ENCODE measurements at regions of chr20 and their contacts with region 1.

Region 1: GRCh38 chr20:20237093-20237959 is 130.6 kb upstream of the INSM1 start:
- DNase-seq: peak in 17 of 35 experiments; percentile 4 to 52 (median 14)
- ATAC-seq: no peak
- H3K4me3 ChIP-seq: no peak overlapping the region
- H3K4me3 Mint-ChIP-seq: no peak overlapping the region
- H3K27ac ChIP-seq: no peak overlapping the region
- H3K27ac Mint-ChIP-seq: no peak overlapping the region
- H3K4me1 ChIP-seq: no peaks in the 10 kb centered on the region
- H3K4me1 Mint-ChIP-seq: peaks cover 0 to 2% (median 0%) of the 10 kb centered on the region in 3 donors
- H3K27me3 ChIP-seq: peaks cover 0 to 9% of the 10 kb centered on the region in 2 experiments
- H3K27me3 Mint-ChIP-seq: peaks cover 8 to 10% of the 10 kb centered on the region in 2 donors

Region 2: DNA sequence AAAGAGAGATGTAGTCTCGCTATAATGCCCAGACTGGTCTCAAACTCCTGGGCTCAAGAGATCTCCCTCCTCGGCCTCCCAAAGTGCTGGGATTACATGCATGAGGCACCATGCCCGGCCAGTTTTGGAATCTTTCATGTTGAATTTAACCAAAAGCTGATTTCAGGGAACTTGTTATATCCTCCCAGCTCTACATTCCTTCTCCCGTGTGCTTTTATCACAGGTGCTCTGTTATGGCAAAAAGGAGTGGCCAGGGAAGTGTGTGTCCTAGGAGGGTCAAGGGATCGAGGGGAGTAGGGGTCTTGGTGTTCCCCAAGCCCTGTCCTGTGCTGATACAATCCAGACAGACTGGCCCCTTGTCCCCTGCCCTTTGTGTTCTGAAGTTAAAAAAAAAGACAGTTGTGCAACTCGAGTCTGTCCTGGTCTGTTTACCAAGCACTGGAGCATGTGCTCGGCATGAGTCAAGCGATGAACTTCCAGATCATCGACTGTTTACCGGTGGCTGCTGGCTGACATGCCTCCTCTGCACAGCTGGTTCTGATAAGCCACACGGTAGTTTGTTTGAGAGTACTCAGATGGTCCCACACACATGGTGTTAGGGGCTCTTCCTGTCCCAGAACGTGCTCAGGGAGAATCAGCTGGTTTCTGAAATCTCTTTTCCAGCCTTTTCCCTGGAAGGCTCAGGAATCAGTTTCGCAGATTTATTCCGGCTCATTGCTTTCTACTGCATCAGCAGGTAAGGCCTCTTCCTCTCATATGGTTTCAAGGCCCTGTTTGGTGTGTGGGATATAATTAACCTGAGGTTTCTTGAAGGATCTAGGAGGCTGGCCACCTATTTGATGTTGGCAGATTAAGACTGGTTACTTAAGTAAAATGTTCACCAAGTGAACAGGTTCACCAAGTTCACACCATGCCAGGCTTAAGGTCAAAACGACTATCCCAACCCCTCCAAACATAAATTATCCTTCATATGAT is 272.8 kb before region 1 on chr20:
- CTCF ChIA-PET with region 1: no interaction called
- POLR2A ChIA-PET with region 1: no interaction called
- DNase-seq: no peak
- ATAC-seq: no peak
- H3K4me3 ChIP-seq: no peak overlapping the region
- H3K4me3 Mint-ChIP-seq: no peak overlapping the region
- H3K27ac ChIP-seq: no peak overlapping the region
- H3K27ac Mint-ChIP-seq: no peak overlapping the region
- H3K4me1 ChIP-seq: peaks cover 4 to 17% of the 10 kb centered on the region in 2 experiments
- H3K4me1 Mint-ChIP-seq: peaks cover 18 to 27% (median 22%) of the 10 kb centered on the region in 3 donors
- H3K27me3 ChIP-seq: no peaks in the 10 kb centered on the region
- H3K27me3 Mint-ChIP-seq: peaks cover 0 to 5% of the 10 kb centered on the region in 2 donors

Region 3: DNA sequence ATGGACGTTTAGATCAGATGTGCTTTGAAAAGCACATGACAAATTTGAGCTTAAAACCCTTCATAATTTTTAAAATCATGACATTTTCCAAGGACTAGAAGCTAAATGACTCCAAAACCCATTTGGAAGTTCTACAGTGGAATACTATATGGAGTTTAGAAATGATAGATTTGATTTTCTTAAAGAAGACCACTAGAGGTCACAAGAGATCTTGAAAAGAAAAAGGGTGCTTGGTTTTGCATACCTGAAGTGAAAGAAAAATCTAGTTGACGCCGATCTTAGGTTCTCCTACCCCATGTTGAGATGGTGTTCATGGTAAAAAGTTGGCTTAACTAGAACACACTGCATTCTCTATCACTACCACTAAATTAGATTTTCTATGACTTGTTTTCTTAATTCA is 153.5 kb before region 1 on chr20:
- CTCF ChIA-PET with region 1: interaction called, 6 to 12 read pairs
- POLR2A ChIA-PET with region 1: interaction called in 1 of 2 experiments, 3 read pairs
- DNase-seq: peak in 1 of 35 experiments; percentile 55
- ATAC-seq: peak in 3 of 4 experiments; percentile 50 to 69 (median 60)
- H3K4me3 ChIP-seq: no peak overlapping the region
- H3K4me3 Mint-ChIP-seq: peak overlapping the region in 2 of 3 donors; percentile 64 to 77
- H3K27ac ChIP-seq: no peak overlapping the region
- H3K27ac Mint-ChIP-seq: peak overlapping the region; percentile 45 to 84
- H3K4me1 ChIP-seq: peaks cover 0 to 5% of the 10 kb centered on the region in 2 experiments
- H3K4me1 Mint-ChIP-seq: peaks cover 6 to 12% (median 8%) of the 10 kb centered on the region in 3 donors
- H3K27me3 ChIP-seq: peaks cover under 1 to 3% of the 10 kb centered on the region in 2 experiments
- H3K27me3 Mint-ChIP-seq: peaks cover 9 to 19% of the 10 kb centered on the region in 2 donors

Measured in T-cell (primary cell).